PC-3 (cell line): ENCODE measurements at regions of chrX and their contacts with region 1.

Region 1: DNA sequence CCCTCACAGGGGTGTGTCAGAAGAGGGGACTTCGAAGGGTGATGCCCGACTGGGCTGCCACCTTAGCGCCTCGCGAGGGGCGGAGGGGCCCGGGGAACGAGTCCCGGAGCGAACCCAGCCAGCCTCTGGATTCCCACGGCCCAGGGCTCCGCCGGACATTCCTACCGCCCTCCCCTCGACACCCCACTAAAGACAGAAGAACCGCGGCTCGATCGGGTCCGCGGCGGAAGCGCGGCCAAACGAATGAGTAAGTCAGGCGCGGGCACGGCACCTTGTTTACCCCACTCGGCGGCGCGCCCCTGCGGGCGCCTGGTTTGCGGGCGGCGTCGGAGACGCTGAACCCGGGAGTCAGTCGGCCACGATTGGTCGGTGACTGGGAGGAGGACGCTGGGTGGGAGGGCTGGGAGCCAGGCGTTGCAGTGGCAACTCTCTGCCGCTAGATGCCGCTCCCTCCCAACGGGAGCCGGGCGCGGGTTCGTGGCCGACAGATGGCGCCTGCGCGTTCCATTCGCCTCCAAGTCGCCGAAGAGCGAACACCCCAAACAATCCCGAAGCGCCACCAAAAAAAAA is 1.4 kb upstream of the STAG2 start:
- DNase-seq: peak; percentile 93
- ATAC-seq: peak; percentile 60
- H3K4me3 ChIP-seq: peak overlapping the region; percentile 91
- H3K27ac ChIP-seq: peak overlapping the region; percentile 96
- H3K4me1 ChIP-seq: peaks cover 22% of the 10 kb centered on the region
- H3K27me3 ChIP-seq: no peaks in the 10 kb centered on the region
- CTCF ChIP-seq: peak; percentile 53

Region 2: GRCh38 chrX:123884809-123885408 is 75.2 kb before region 1 on chrX:
- CTCF ChIA-PET with region 1: no interaction called
- POLR2A ChIA-PET with region 1: no interaction called
- intact Hi-C with region 1: loop called (anchors 2 kb)
- DNase-seq: peak; percentile 68
- ATAC-seq: peak; percentile 50
- H3K4me3 ChIP-seq: no peak overlapping the region
- H3K27ac ChIP-seq: no peak overlapping the region
- H3K4me1 ChIP-seq: peaks cover 13% of the 10 kb centered on the region
- H3K27me3 ChIP-seq: no peaks in the 10 kb centered on the region
- CTCF ChIP-seq: peak; percentile 70

Region 3: DNA sequence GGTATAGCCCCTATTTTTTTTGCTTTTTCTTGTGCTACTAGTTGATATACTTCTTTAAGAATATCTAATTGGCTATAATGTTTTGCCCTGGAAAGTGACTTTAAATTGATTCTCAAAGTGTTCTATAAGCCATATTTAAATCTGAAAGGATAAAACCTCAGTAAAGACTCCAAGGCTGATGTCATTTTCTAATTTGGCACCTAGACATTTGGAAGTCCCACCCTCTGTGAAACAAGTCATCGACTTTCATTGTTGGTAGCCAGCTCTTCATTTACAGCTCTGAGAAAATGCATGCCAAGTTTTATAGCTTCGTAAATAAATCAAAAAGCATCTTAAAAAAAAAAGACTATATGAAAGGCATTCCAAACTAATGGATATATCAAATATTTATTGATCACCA is 16.6 kb before region 1 on chrX:
- CTCF ChIA-PET with region 1: no interaction called
- POLR2A ChIA-PET with region 1: no interaction called
- intact Hi-C with region 1: no loop called
- DNase-seq: no peak
- ATAC-seq: no peak
- H3K4me3 ChIP-seq: no peak overlapping the region
- H3K27ac ChIP-seq: no peak overlapping the region
- H3K4me1 ChIP-seq: no peaks in the 10 kb centered on the region
- H3K27me3 ChIP-seq: no peaks in the 10 kb centered on the region
- CTCF ChIP-seq: no peak

Region 4: GRCh38 chrX:123976706-123977316 is 16.7 kb after region 1 on chrX:
- CTCF ChIA-PET with region 1: interaction called, 11 read pairs
- POLR2A ChIA-PET with region 1: interaction called, 12 read pairs
- intact Hi-C with region 1: loop called (anchors 1 kb)
- DNase-seq: peak; percentile 69
- ATAC-seq: peak; percentile 66
- H3K4me3 ChIP-seq: no peak overlapping the region
- H3K27ac ChIP-seq: no peak overlapping the region
- H3K4me1 ChIP-seq: peaks cover 14% of the 10 kb centered on the region
- H3K27me3 ChIP-seq: no peaks in the 10 kb centered on the region
- CTCF ChIP-seq: peak; percentile 67

Region 5: DNA sequence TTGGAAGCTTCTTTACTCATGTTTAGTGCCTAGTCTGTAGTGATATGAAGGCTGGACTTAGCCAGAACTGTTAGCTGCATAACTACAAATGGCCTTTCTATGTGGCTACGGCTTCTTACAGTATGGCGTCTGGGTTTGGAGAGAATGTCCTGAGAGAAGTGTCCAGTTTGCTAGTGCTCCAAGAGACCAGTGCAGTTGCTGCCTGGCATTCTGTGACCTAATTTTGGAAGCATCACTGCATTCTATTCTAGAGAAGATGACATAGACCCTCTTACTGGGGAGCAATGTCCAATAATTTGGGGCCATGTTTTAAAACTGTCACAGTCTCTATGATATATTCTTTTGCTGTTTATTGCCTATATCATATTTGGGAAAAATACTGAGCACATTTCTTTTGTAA is 75.5 kb after region 1 on chrX:
- CTCF ChIA-PET with region 1: no interaction called
- POLR2A ChIA-PET with region 1: interaction called, 19 read pairs
- intact Hi-C with region 1: no loop called
- DNase-seq: no peak
- ATAC-seq: no peak
- H3K4me3 ChIP-seq: no peak overlapping the region
- H3K27ac ChIP-seq: no peak overlapping the region
- H3K4me1 ChIP-seq: peaks cover 13% of the 10 kb centered on the region
- H3K27me3 ChIP-seq: no peaks in the 10 kb centered on the region
- CTCF ChIP-seq: no peak

Region 6: DNA sequence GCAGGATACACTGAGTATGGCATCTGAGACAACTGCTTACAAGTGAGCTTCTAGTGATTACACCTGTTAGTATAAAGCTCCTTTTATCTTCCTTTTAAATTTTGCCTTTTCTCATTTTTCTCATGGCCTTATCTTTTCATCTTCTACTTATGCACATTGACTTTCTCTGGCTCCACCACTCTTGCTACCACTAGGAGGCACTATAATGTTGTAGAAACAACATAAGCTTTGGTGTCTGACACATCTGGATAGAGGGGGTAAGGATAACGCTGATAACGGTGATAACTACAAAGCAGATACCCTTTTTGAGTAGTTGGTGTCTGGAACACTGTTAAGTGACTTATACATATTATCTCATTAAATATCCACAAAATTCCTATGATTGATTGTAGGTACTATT is 1172.2 kb after region 1 on chrX:
- CTCF ChIA-PET with region 1: no interaction called
- POLR2A ChIA-PET with region 1: no interaction called
- intact Hi-C with region 1: loop called (anchors 5 kb)
- DNase-seq: peak; percentile 53
- ATAC-seq: no peak
- H3K4me3 ChIP-seq: no peak overlapping the region
- H3K27ac ChIP-seq: no peak overlapping the region
- H3K4me1 ChIP-seq: no peaks in the 10 kb centered on the region
- H3K27me3 ChIP-seq: no peaks in the 10 kb centered on the region
- CTCF ChIP-seq: peak; percentile 78